ENCODE measurements at regions of chr17 and their contacts with region 1.

Region 1: GRCh38 chr17:10618202-10618635 is 38.9 kb downstream of the MYH3 start:
- DNase-seq: peak; percentile 18
- H3K4me3 ChIP-seq: no peak overlapping the region
- H3K27ac ChIP-seq: no peak overlapping the region
- H3K27me3 ChIP-seq: no peaks in the 10 kb centered on the region
- CTCF ChIP-seq: peak; percentile 93

Region 2: DNA sequence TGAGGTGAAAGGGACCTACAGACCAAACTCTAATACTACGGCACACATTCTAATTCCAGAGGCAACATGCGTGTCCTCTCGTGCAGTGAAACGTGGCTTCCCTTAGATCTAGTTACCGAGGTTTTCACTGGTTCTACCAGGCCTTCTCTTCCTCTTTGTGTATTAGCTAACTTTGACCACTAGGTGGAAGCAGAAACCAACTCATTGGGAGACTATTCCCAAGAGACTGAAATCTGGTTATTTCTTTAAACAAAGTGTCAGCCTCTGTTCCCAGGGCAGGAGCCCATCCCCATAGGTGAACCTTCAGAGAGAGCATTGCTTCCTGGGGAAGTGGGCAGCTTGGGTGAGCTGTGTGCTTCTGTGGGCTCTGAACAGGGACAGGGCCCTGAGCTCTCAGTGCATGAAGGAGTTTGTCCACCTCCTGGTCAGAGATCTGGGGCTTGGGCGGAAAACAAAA is 693.5 kb before region 1 on chr17:
- CTCF ChIA-PET with region 1: interaction called, 205 read pairs
- POLR2A ChIA-PET with region 1: no interaction called
- DNase-seq: peak; percentile 21
- H3K4me3 ChIP-seq: no peak overlapping the region
- H3K27ac ChIP-seq: peak overlapping the region; percentile 21
- H3K27me3 ChIP-seq: no peaks in the 10 kb centered on the region
- CTCF ChIP-seq: peak; percentile 85

Region 3: DNA sequence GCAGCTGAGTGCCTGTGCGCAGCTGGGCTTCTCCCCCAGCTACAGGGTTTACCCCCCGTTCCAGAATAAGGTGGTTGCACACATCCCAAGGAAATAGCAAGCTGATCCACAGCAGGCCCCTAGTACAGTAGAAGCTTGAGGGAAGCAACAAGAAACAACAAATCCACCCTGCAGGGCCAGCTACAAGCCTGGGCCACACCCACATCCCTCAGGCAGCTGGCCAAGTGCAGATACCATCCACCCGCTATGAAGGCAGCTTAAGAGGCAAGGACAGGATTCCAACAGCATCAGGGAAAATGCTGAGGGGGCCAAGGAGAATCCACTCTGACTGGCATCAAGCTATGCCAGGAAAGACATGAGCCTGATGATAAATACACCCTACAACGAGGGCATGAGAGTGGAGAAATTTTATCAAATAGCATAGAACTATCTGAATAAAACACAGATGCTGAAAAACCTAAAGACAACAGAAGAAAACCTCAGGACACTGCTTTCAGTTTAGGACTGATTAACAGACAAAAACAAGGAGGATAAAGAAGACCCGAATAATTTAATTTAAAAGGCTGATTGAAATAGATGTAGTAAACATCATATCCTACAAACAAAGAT is 646.1 kb before region 1 on chr17:
- CTCF ChIA-PET with region 1: interaction called, 22 read pairs
- POLR2A ChIA-PET with region 1: no interaction called
- DNase-seq: no peak
- H3K4me3 ChIP-seq: no peak overlapping the region
- H3K27ac ChIP-seq: no peak overlapping the region
- H3K27me3 ChIP-seq: no peaks in the 10 kb centered on the region
- CTCF ChIP-seq: no peak

Region 4: DNA sequence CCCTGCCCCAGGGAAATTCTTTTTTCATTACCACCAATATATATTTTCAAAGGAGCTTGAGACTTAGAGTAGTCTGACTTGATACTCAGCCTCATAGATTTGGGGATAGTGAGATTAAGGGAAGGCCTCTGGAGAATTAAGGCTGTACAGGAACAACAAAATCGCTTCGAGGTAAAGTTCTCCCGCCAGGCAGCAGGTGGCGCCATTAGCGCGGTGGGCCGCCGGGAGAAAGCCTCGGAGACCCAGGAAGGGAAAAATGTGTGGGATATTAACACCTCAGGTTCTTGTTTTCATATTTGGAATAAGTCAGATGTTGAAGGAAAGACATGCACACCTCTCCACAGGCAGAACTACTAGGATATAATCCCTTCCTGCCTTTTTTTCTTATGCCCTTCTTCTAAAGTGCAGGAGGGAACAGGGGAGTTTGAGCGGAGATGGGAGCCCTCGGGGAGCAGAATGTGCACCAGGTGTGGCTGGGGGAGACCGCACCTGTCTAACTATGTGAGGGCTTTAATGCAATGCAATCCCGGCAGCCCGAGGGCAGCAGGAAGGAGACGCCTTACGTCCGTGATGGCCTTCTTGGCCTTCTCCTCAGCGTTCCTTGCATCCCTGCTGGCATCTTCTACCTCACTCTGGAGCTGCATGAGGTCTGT is 13.0 kb after region 1 on chr17:
- CTCF ChIA-PET with region 1: interaction called, 296 read pairs
- POLR2A ChIA-PET with region 1: no interaction called
- DNase-seq: no peak
- H3K4me3 ChIP-seq: no peak overlapping the region
- H3K27ac ChIP-seq: no peak overlapping the region
- H3K27me3 ChIP-seq: no peaks in the 10 kb centered on the region
- CTCF ChIP-seq: peak; percentile 88

Region 5: DNA sequence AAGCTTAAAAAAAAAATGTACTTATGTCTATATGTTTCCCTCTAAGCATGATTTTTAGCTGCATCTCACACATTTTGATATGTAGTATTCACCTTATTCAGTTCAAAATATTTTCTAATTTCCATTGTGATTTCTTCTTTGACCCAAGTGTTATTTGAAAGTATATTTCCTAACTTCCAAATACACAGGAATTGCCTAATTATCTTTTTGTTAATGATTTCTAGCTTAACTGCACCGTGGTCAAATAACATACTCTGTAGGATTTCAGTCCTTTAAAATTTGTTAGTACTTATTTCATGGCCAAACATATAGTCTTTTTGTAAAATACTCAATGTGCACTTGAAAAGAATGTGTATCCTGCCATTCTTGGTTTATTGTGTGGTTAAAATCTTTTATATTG is 100.3 kb after region 1 on chr17:
- CTCF ChIA-PET with region 1: interaction called, 10 read pairs
- POLR2A ChIA-PET with region 1: no interaction called
- DNase-seq: no peak
- H3K4me3 ChIP-seq: no peak overlapping the region
- H3K27ac ChIP-seq: no peak overlapping the region
- H3K27me3 ChIP-seq: no peaks in the 10 kb centered on the region
- CTCF ChIP-seq: no peak

Region 6: DNA sequence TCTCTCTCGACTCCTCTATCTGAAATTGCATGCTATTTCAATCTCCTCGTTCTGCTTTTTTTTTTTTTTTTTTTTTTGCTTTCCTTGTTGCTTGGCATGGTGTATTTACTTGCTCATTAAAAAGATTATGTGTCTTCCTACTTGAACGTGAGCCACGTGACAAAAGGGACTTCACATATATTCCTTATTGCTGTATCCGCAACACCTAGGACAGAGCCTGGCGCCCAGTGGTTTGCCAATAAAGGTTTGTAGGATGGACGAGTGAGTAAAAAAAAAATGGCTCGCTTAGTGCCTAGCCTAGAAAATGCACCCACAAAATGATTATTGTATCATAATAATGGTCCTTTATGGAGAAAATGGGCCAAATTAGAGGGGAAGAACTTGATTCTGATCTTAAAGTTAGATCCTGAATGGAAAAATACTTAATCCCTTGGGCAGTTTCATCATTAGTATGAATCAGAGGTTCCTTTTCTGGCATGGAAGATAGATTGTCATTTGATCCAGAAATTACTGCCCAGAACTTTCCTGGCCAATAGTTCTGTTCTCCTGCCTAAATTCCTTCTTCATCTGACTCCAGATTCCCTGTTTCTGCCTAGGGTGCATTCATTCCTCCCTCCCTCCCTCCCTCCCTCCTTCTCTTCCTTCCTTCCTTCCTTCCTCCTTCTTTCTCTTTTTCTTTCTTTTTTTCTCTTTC is 125.2 kb after region 1 on chr17:
- CTCF ChIA-PET with region 1: no interaction called
- POLR2A ChIA-PET with region 1: no interaction called
- DNase-seq: no peak
- H3K4me3 ChIP-seq: no peak overlapping the region
- H3K27ac ChIP-seq: no peak overlapping the region
- H3K27me3 ChIP-seq: peaks cover 14% of the 10 kb centered on the region
- CTCF ChIP-seq: no peak